ENCODE measurements at regions of chr17 and their contacts with region 1.

Region 1: DNA sequence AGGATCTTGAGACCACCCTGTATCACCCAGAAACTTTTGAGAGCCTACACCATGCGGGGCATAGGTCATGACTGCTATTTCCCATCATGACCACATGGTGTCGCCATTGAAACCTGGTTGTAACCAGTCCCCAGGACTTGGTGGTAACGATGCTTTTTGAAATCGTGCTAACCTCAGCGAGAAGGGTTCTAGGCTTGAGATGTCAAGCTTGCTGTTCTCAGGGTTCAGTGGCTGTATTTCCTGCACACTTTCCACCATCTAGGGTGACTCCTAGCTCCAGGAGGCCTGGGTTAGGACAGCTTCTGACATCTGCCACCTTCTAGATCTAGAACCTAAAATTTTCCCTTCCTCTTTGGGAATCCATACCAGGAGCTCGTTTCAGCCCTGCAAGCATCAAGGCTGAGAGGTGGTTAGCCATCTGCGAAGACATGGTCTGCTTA is 13.0 kb upstream of the SPNS3 start:
- DNase-seq: peak in 2 of 3 donors; percentile 39 to 71
- ATAC-seq: peak; percentile 97
- H3K4me3 ChIP-seq: no peak overlapping the region
- H3K4me1 ChIP-seq: peaks cover 4% of the 10 kb centered on the region
- CTCF ChIP-seq: peak; percentile 60

Region 2: GRCh38 chr17:3944485-3945388 is 476.0 kb before region 1 on chr17:
- intact Hi-C with region 1: no loop called
- DNase-seq: peak in 1 of 3 donors; percentile 66
- ATAC-seq: peak; percentile 82
- H3K4me3 ChIP-seq: no peak overlapping the region
- H3K4me1 ChIP-seq: no peaks in the 10 kb centered on the region
- CTCF ChIP-seq: no peak

Region 3: GRCh38 chr17:4004517-4005295 is 416.0 kb before region 1 on chr17:
- intact Hi-C with region 1: no loop called
- DNase-seq: peak; percentile 77 to 83 (median 80)
- ATAC-seq: peak; percentile 87
- H3K4me3 ChIP-seq: no peak overlapping the region
- H3K4me1 ChIP-seq: peaks cover 8% of the 10 kb centered on the region
- CTCF ChIP-seq: peak; percentile 98

Region 4: DNA sequence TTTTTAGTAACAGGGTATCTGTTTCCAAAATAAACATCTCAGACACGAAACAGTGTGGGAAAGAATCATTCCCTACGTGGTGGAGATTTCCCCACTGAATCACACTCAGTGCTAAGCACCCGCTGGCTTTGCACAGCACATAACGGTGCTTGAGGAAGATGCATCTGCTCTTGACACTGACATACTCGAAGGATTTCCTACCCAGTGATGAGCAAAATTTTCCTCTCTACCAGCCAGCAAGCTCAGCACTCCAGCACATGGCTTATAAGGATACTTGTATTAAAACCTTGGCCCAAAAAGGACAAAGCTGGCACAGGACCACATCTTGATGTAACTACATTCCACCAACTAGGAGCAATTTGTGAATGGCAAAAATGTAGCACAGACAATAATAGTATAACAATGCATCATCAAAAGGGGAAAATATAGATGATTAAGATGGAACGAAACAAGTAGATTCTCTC is 216.0 kb before region 1 on chr17:
- intact Hi-C with region 1: loop called in 1 of 2 experiments (anchors 5 kb)
- DNase-seq: peak in 1 of 3 donors; percentile 48
- ATAC-seq: peak; percentile 63
- H3K4me3 ChIP-seq: no peak overlapping the region
- H3K4me1 ChIP-seq: no peaks in the 10 kb centered on the region
- CTCF ChIP-seq: no peak

Region 5: GRCh38 chr17:4625181-4625617 is 204.5 kb after region 1 on chr17:
- intact Hi-C with region 1: loop called in 1 of 2 experiments (anchors 5 kb)
- DNase-seq: no peak
- ATAC-seq: no peak
- H3K4me3 ChIP-seq: no peak overlapping the region
- H3K4me1 ChIP-seq: no peaks in the 10 kb centered on the region
- CTCF ChIP-seq: no peak

Measured in mucosa of descending colon (tissue), 3 donors.